ENCODE measurements at regions of chr1 and their contacts with region 1.

Region 1: GRCh38 chr1:223556414-223557129 is 108.9 kb downstream of the CAPN8 start:
- DNase-seq: peak; percentile 75
- H3K4me3 Mint-ChIP-seq: no peak overlapping the region
- H3K27ac Mint-ChIP-seq: no peak overlapping the region
- H3K4me1 Mint-ChIP-seq: no peaks in the 10 kb centered on the region
- H3K27me3 Mint-ChIP-seq: no peaks in the 10 kb centered on the region

Region 2: GRCh38 chr1:223611936-223612335 is 55.4 kb after region 1 on chr1:
- CTCF ChIA-PET with region 1: interaction called, 27 read pairs
- POLR2A ChIA-PET with region 1: no interaction called
- intact Hi-C with region 1: no loop called
- DNase-seq: no peak
- H3K4me3 Mint-ChIP-seq: no peak overlapping the region
- H3K27ac Mint-ChIP-seq: no peak overlapping the region
- H3K4me1 Mint-ChIP-seq: no peaks in the 10 kb centered on the region
- H3K27me3 Mint-ChIP-seq: no peaks in the 10 kb centered on the region

Region 3: DNA sequence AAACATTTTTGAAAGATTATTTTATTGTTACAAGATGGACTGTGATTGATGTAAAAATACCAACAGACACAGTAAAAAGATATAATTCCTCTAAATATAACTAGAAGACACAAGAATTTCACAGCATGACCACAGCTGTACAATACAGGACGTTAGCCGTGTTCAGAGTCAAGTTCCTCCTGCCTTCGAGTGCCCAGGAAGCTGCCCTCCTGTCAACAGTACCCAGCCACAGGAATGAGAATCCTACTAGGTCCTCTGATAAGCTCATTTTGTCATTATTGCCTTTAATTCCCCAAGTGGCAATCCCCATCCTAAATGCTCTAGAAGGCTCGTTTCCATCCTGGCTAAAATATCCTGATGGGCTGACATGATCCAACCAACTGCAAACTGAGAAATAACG is 139.4 kb after region 1 on chr1:
- CTCF ChIA-PET with region 1: interaction called, 14 read pairs
- POLR2A ChIA-PET with region 1: no interaction called
- intact Hi-C with region 1: no loop called
- DNase-seq: no peak
- H3K4me3 Mint-ChIP-seq: no peak overlapping the region
- H3K27ac Mint-ChIP-seq: no peak overlapping the region
- H3K4me1 Mint-ChIP-seq: peaks cover 9% of the 10 kb centered on the region
- H3K27me3 Mint-ChIP-seq: peaks cover 4% of the 10 kb centered on the region

Region 4: DNA sequence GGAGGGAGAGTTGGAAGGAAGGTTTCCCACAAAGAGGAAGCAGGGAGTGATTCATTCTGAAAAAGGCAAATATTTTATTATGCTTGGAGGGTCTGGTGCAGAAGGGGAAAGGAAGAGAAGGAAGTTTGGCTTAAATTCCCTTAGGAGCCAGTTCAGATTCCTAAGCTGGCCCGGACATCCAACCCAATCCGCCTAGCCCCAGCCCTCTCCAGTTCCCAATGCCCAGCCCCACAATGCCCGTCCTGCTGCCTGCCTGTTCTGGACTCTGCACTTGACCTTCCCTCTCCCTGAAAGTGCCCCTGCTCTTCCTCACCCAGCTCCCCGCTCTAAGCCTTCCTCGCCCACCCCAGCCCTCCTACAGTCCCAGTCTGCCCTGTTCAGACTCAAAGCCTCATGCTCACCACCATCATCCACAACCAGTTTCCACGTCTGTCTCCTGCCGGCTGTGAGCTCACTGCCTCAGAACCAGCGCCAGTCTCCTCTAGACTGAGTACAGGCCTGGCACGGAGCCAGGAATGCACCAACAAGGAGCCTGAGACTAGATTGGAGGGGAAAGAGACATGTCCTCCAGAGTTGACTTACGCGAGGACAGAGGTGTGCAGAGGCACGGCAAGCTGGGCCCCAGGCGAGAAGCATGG is 174.7 kb after region 1 on chr1:
- CTCF ChIA-PET with region 1: no interaction called
- POLR2A ChIA-PET with region 1: no interaction called
- intact Hi-C with region 1: no loop called
- DNase-seq: no peak
- H3K4me3 Mint-ChIP-seq: no peak overlapping the region
- H3K27ac Mint-ChIP-seq: peak overlapping the region; percentile 7
- H3K4me1 Mint-ChIP-seq: peaks cover 62% of the 10 kb centered on the region
- H3K27me3 Mint-ChIP-seq: no peaks in the 10 kb centered on the region